ENCODE measurements at regions of chr10 and their contacts with region 1.

Region 1: GRCh38 chr10:103605359-103606095 is 112.0 kb downstream of the NEURL1 start:
- DNase-seq: no peak
- H3K4me3 ChIP-seq: no peak overlapping the region
- H3K27ac ChIP-seq: peak overlapping the region in 1 of 2 donors; percentile 19
- H3K4me1 ChIP-seq: no peaks in the 10 kb centered on the region
- H3K27me3 ChIP-seq: no peaks in the 10 kb centered on the region
- CTCF ChIP-seq: peak; percentile 63 to 90 (median 64)
- POLR2A ChIP-seq: no peak

Region 2: DNA sequence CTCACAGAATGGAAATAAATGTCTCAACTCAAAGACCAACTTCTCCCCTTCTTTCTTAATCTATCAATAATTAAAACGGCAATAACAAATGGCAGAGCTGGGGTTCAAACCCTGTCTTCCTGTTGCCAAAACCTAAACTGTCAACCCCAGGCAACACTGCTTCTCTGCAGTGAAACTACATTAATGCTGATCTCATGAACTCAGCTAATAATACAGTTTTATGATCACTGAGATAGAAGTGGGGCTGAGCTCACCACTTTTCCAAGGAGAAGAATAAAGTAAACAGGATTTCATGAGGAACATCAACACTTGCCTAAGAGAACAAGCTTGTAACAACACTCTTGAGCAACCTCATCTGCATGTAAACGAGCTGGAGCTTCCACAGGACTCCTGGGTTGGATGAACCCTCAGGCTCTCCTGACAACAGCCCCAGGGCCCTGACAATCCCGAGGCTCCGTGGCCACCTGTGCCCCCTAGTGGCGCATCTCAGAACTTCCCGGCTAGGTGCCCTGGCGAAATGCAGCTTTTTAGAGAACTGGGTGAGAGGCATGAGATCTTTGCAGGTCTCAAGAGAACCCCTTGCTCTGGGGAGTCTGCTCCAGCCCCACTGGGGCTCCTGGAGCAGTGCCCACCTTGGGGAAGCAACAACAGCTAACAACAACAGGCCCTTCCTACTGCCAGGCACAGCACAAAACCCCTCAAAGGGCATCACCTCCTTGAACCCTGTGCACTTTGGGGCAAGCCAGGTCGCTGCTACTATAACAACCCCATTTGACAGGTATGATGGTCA is 80.5 kb after region 1 on chr10:
- intact Hi-C with region 1: loop called (anchors 10 kb)
- DNase-seq: peak; percentile 43 to 66
- H3K4me3 ChIP-seq: no peak overlapping the region
- H3K27ac ChIP-seq: peak overlapping the region in 1 of 2 donors; percentile 45
- H3K4me1 ChIP-seq: no peaks in the 10 kb centered on the region
- H3K27me3 ChIP-seq: no peaks in the 10 kb centered on the region
- CTCF ChIP-seq: peak; percentile 86 to 89 (median 88)
- POLR2A ChIP-seq: no peak

Measured in breast epithelium (tissue), 4 donors.